ENCODE measurements at regions of chr12 and their contacts with region 1.

Region 1: DNA sequence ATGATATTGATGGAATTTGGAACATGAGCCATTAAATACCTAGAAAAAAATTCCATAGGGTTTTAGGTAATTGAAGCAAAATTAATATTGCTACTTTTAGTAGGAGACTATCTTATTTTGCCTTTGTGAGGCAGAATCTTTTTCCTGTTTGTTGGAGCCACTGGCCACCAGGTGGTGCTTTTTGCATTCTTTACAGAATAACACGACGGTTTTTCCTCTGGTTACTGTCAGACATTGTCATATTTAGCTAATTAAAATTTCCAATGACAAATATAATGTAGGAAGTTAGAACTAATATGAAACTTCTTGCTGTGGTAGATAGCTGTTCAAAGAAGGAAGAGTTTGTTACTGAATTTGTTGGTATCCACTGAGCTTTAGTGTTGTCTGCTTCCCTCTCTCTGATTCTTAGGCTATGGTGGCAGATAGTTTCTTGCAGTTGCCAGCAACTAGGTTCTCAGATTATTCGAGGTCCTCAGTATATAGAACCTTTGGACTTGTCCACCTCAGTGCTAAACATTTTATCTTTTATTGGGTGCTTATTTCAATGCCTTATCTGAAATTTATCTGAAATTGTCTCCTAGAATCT is 25.7 kb downstream of the RAB21 start:
- DNase-seq: peak; percentile 71
- H3K4me3 ChIP-seq: no peak overlapping the region
- H3K27ac ChIP-seq: no peak overlapping the region
- H3K4me1 ChIP-seq: peaks cover 10% of the 10 kb centered on the region
- H3K27me3 ChIP-seq: no peaks in the 10 kb centered on the region
- CTCF ChIP-seq: peak; percentile 47 to 61
- POLR2A ChIP-seq: no peak

Region 2: DNA sequence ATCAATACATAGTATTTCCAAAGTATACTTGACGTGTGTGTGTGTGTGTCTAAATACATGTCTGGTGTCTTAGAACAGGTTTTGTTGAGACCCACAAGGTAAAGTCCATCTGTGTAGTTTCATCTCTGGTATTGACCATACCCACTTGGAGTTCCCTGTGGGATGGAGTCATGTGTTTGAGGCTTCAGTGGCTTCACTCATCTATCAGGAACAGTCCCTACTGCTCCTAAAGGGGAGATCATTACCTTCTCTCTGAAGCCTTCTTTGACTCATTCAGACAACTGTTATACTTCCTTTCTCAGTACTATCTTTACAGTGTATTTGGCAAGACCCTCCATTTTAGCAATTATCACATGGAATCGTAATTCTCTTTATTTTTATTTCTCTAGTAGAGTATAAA is 11.4 kb before region 1 on chr12:
- CTCF ChIA-PET with region 1: interaction called, 14 read pairs
- POLR2A ChIA-PET with region 1: no interaction called
- dilution Hi-C with region 1: no loop called
- intact Hi-C with region 1: no loop called
- DNase-seq: no peak
- H3K4me3 ChIP-seq: no peak overlapping the region
- H3K27ac ChIP-seq: no peak overlapping the region
- H3K4me1 ChIP-seq: no peaks in the 10 kb centered on the region
- H3K27me3 ChIP-seq: no peaks in the 10 kb centered on the region
- CTCF ChIP-seq: no peak
- POLR2A ChIP-seq: no peak

Region 3: DNA sequence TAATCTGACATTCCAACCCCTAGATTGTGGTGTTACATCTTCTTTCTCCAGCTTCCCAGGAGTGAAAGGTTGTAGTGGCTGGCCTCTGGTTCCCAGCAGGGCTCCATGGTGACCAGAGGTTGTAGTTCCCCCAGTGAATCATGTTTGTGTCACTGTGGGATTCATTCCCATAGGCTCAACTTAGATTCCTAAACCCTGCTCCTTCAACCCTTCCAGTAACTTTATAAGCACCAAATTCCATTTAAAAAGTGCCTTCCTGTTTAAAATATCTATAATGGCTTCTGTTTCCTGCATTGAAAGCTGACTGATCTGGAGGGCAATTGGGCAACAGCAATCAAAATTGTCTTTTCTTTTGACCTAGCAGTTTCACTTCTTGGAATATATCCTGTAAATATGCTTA is 18.8 kb after region 1 on chr12:
- CTCF ChIA-PET with region 1: interaction called, 23 read pairs
- POLR2A ChIA-PET with region 1: interaction called, 3 read pairs
- dilution Hi-C with region 1: no loop called
- intact Hi-C with region 1: no loop called
- DNase-seq: peak; percentile 85
- H3K4me3 ChIP-seq: no peak overlapping the region
- H3K27ac ChIP-seq: peak overlapping the region; percentile 35
- H3K4me1 ChIP-seq: peaks cover 13% of the 10 kb centered on the region
- H3K27me3 ChIP-seq: no peaks in the 10 kb centered on the region
- CTCF ChIP-seq: no peak
- POLR2A ChIP-seq: no peak

Region 4: GRCh38 chr12:71828810-71829209 is 48.5 kb after region 1 on chr12:
- CTCF ChIA-PET with region 1: no interaction called
- POLR2A ChIA-PET with region 1: no interaction called
- dilution Hi-C with region 1: no loop called
- intact Hi-C with region 1: no loop called
- DNase-seq: no peak
- H3K4me3 ChIP-seq: no peak overlapping the region
- H3K27ac ChIP-seq: no peak overlapping the region
- H3K4me1 ChIP-seq: no peaks in the 10 kb centered on the region
- H3K27me3 ChIP-seq: no peaks in the 10 kb centered on the region
- CTCF ChIP-seq: no peak
- POLR2A ChIP-seq: no peak

Region 5: DNA sequence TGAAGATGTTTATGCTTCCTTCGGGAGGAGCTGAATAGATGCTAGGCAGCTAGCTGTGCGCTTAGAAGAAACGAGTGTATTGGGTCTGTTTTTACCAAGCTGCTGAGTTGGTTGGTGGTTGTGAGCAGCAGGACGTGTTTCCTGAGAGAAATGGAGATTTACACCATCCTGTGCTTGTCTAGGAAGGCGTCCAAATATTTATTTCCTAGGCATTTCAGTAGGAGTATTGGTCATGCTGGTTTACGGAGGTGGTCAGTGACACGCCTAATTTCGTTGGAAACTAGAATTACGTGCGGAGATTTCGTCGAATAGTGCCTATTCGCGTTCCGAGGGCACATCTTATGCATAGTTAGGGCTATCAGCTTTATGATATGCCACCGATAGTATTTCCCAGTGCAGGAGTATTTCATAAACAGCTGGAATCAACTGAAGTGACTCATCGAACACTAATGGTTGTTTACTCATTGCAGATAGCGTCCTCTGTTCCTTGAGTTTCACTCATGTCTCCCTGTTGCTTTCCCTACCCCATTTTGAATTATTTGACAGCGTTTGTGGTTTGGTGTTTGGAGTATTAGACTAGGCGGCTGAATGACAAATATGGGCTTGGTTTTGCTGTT is 60.0 kb after region 1 on chr12:
- CTCF ChIA-PET with region 1: interaction called, 115 read pairs
- POLR2A ChIA-PET with region 1: no interaction called
- dilution Hi-C with region 1: no loop called
- intact Hi-C with region 1: loop called (anchors 1 kb)
- DNase-seq: peak; percentile 92
- H3K4me3 ChIP-seq: peak overlapping the region; percentile 45 to 87 (median 71)
- H3K27ac ChIP-seq: peak overlapping the region; percentile 94
- H3K4me1 ChIP-seq: peaks cover 10% of the 10 kb centered on the region
- H3K27me3 ChIP-seq: no peaks in the 10 kb centered on the region
- CTCF ChIP-seq: no peak
- POLR2A ChIP-seq: no peak

Region 6: DNA sequence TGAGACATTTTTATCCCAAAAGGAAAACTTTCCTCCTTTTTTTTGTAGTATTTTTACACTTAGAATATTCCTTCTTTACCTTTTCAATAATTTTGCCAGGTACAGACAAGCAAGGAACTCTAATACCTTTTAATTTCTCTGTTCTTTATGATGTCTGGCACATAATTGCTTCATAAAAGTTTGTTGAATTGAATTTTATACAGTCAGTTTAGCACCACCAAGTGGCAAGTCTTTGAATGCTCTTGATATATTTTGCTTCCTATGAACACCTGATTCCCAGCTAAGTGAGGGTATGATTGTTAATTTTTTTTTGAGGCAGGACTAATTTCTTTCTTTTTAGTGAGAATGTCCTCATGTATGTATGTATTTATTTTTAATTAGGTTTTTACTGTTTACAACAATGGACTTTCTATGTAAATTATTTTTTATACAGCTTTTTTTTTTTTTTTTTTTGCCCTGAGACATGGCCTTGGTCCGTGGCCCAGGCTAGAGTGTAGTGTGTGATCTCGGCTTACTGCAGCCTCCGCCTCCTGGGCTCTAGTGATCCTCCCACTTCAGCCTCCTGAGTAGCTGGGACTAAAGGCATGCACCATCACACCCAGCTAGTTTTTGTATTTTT is 66.1 kb after region 1 on chr12:
- CTCF ChIA-PET with region 1: interaction called, 115 read pairs
- POLR2A ChIA-PET with region 1: interaction called, 3 read pairs
- dilution Hi-C with region 1: no loop called
- intact Hi-C with region 1: loop called (anchors 1 kb)
- DNase-seq: peak; percentile 54
- H3K4me3 ChIP-seq: no peak overlapping the region
- H3K27ac ChIP-seq: no peak overlapping the region
- H3K4me1 ChIP-seq: peaks cover under 1% of the 10 kb centered on the region
- H3K27me3 ChIP-seq: no peaks in the 10 kb centered on the region
- CTCF ChIP-seq: peak; percentile 9 to 45
- POLR2A ChIP-seq: no peak

Region 7: GRCh38 chr12:71900091-71900490 is 119.8 kb after region 1 on chr12:
- CTCF ChIA-PET with region 1: interaction called, 10 read pairs
- POLR2A ChIA-PET with region 1: no interaction called
- dilution Hi-C with region 1: no loop called
- intact Hi-C with region 1: loop called (anchors 1 kb)
- DNase-seq: peak; percentile 43
- H3K4me3 ChIP-seq: no peak overlapping the region
- H3K27ac ChIP-seq: no peak overlapping the region
- H3K4me1 ChIP-seq: no peaks in the 10 kb centered on the region
- H3K27me3 ChIP-seq: no peaks in the 10 kb centered on the region
- CTCF ChIP-seq: peak; percentile 5 to 31
- POLR2A ChIP-seq: no peak

Region 8: DNA sequence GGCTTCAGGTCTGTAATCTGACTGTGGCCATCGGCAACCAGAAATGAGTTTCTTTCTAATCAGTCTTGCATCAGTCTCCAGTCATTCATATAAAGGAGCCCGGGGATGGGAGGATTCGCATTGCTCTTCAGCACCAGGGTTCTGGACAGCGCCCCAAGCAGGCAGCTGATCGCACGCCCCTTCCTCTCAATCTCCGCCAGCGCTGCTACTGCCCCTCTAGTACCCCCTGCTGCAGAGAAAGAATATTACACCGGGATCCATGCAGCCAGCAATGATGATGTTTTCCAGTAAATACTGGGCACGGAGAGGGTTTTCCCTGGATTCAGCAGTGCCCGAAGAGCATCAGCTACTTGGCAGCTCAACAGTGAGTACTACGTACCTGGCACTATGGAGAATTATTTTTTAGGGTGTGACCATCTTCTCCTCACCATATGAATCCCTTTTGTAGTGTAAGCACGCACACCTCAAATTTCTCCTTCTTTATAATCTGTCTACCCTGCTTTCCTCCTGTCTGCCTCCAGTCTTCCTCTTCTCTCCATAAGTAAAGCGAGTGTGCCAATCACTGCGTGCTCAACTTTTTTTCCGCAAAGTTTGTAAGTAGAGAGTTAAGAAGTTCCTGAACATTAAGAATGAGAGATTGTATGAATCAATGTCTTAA is 158.5 kb after region 1 on chr12 and contains the start of gene TPH2:
- CTCF ChIA-PET with region 1: interaction called, 50 read pairs
- POLR2A ChIA-PET with region 1: no interaction called
- dilution Hi-C with region 1: no loop called
- intact Hi-C with region 1: loop called (anchors 1 kb)
- DNase-seq: peak; percentile 83
- H3K4me3 ChIP-seq: no peak within 1 kb of the TSS
- H3K27ac ChIP-seq: no peak within 1 kb of the TSS
- H3K4me1 ChIP-seq: no peaks in the 10 kb centered on the region
- H3K27me3 ChIP-seq: peaks cover 2 to 6% of the 10 kb centered on the region in 2 experiments
- CTCF ChIP-seq: peak; percentile 71 to 77
- POLR2A ChIP-seq: no peak
- total RNA-seq, gene TPH2: not detected in 2 replicates

Region 9: GRCh38 chr12:72995616-72996015 is 1215.3 kb after region 1 on chr12:
- CTCF ChIA-PET with region 1: no interaction called
- POLR2A ChIA-PET with region 1: no interaction called
- dilution Hi-C with region 1: no loop called
- intact Hi-C with region 1: no loop called
- DNase-seq: no peak
- H3K4me3 ChIP-seq: no peak overlapping the region
- H3K27ac ChIP-seq: no peak overlapping the region
- H3K4me1 ChIP-seq: no peaks in the 10 kb centered on the region
- H3K27me3 ChIP-seq: no peaks in the 10 kb centered on the region
- CTCF ChIP-seq: no peak
- POLR2A ChIP-seq: no peak